PC-9 (cell line): ENCODE measurements at regions of chr13 and their contacts with region 1.

Region 1: GRCh38 chr13:34657716-34658115 is 284.4 kb upstream of the NBEA start:
- DNase-seq: no peak
- H3K4me3 ChIP-seq: no peak overlapping the region
- H3K27ac ChIP-seq: no peak overlapping the region
- H3K4me1 ChIP-seq: no peaks in the 10 kb centered on the region
- H3K27me3 ChIP-seq: no peaks in the 10 kb centered on the region
- CTCF ChIP-seq: no peak

Region 2: DNA sequence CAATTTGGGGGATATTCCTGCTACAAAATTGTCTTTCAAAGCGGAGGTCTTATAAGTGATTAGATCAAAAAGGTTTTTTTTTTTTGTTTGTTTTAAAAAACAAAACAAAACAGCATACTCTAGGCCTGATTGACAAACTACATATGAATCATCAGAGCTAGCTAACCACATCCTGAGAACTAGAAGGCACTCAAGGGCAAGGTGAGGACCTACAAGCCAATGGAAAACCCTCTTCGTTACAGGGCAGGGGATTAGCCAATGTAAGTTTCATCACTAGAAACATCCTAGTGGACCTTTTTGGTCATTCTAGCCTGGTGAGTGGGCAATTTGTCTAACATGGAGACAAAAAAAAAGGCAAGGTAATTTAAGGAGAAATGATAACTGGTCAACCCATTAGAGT is 411.2 kb before region 1 on chr13:
- CTCF ChIA-PET with region 1: no interaction called
- POLR2A ChIA-PET with region 1: no interaction called
- intact Hi-C with region 1: loop called (anchors 5 kb)
- DNase-seq: peak; percentile 18 to 92
- H3K4me3 ChIP-seq: no peak overlapping the region
- H3K27ac ChIP-seq: peak overlapping the region; percentile 54
- H3K4me1 ChIP-seq: peaks cover 27% of the 10 kb centered on the region
- H3K27me3 ChIP-seq: no peaks in the 10 kb centered on the region
- CTCF ChIP-seq: no peak

Region 3: DNA sequence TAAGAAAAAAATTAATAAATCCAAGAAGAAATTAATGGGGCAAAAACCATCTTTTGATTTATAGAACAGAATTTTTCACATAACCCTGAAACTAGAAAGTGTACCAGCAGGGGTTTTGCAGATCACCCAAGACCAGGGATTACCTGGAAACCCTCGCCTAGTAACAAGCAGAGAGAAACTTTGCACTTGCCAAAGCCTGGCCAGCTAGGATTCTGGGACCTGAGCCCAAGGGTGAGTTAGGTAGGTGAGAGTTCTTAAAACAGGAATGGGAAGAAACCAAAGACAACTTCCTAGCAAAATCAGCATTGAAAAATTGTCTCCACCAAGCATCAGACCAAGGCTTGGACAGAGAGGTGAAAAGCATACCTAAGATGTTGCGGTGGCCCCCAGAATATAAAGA is 37.3 kb after region 1 on chr13:
- CTCF ChIA-PET with region 1: no interaction called
- POLR2A ChIA-PET with region 1: no interaction called
- intact Hi-C with region 1: loop called (anchors 2 kb)
- DNase-seq: no peak
- H3K4me3 ChIP-seq: no peak overlapping the region
- H3K27ac ChIP-seq: no peak overlapping the region
- H3K4me1 ChIP-seq: peaks cover 10% of the 10 kb centered on the region; the same call in 1 of the 2 replicates
- H3K27me3 ChIP-seq: no peaks in the 10 kb centered on the region
- CTCF ChIP-seq: no peak

Region 4: DNA sequence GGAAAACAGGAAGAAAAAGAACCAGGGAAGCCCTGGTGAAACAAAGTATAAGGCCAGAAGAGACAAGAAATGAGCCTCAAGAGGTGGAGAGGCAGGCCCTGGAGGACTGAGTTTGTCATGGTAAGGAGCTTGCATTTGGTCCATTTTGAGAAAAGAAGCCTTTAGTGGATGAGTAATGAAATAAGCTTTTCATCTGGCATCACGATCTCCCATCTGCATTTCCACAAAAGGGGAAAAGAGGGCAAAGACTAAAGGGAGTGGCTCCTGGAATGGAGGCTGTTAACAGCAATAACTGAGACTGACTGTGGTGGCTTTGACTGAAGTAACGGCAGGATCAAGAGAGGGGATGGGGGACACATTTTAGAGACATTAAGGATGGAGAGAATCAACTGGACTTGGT is 135.6 kb after region 1 on chr13:
- CTCF ChIA-PET with region 1: no interaction called
- POLR2A ChIA-PET with region 1: no interaction called
- intact Hi-C with region 1: no loop called
- DNase-seq: no peak
- H3K4me3 ChIP-seq: no peak overlapping the region
- H3K27ac ChIP-seq: no peak overlapping the region
- H3K4me1 ChIP-seq: no peaks in the 10 kb centered on the region
- H3K27me3 ChIP-seq: no peaks in the 10 kb centered on the region
- CTCF ChIP-seq: no peak